Mammary epithelial cell (primary cell): ENCODE measurements at regions of chr1 and their contacts with region 1.

Region 1: GRCh38 chr1:231211005-231211857 is 29.8 kb upstream of the GNPAT start:
- DNase-seq: peak; percentile 64
- H3K4me3 ChIP-seq: peak overlapping the region; percentile 37 to 58 (median 37)
- H3K27ac ChIP-seq: no peak overlapping the region
- H3K4me1 ChIP-seq: peaks cover under 1% of the 10 kb centered on the region
- H3K27me3 ChIP-seq: no peaks in the 10 kb centered on the region
- CTCF ChIP-seq: peak; percentile 76 to 95

Region 2: DNA sequence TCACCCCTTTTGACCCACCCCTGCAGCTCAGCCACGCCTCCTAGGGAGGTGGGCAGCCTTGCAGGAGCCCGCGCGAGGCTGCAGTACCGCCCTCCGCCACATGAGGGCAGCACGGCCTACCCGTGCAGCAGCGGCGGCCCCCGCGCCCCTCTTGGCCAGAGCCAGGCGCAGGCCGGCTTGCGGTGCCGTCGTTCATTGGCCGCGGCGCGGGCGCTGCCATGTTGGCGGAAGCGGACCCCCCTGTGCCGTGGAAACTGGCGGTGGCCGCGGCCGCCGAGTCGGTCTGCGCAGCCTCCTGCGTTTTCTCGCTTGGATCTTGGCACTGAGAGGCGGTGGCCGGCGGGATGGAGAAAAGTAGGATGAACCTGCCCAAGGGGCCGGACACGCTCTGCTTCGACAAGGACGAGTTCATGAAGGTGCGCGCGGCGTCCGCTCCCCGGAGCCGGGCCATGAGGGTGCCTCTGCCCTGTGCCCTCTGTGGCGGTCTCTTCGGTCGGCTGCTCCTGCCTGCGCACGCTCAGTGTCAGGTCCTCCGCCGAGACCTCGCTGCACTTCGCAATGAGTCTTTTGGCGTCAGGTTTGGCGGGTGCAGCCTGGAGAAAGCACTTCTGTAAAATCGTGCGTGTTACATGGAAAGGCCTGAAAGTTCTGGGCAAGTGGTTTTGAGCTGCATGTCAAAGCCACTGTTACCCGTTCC is 568.8 kb before region 1 on chr1 and contains the start of gene COG2:
- CTCF ChIA-PET with region 1: no interaction called
- dilution Hi-C with region 1: no loop called
- in situ Hi-C with region 1: loop called in 1 of 2 experiments (anchors 25 kb)
- intact Hi-C with region 1: no loop called
- DNase-seq: peak; percentile 89
- H3K4me3 ChIP-seq: peak within 1 kb of the TSS; percentile 57 to 94 (median 68)
- H3K27ac ChIP-seq: peak within 1 kb of the TSS; percentile 42
- H3K4me1 ChIP-seq: peaks cover 16% of the 10 kb centered on the region
- H3K27me3 ChIP-seq: no peaks in the 10 kb centered on the region
- CTCF ChIP-seq: peak; percentile 94 to 97
- total RNA-seq, gene COG2: 16.7 to 17.7 TPM

Region 3: GRCh38 chr1:230917284-230918135 is 293.7 kb before region 1 on chr1:
- CTCF ChIA-PET with region 1: no interaction called
- dilution Hi-C with region 1: no loop called
- in situ Hi-C with region 1: loop called (anchors 10 to 25 kb)
- intact Hi-C with region 1: loop called (anchors 1 kb)
- DNase-seq: peak; percentile 44
- H3K4me3 ChIP-seq: no peak overlapping the region
- H3K27ac ChIP-seq: no peak overlapping the region
- H3K4me1 ChIP-seq: no peaks in the 10 kb centered on the region
- H3K27me3 ChIP-seq: no peaks in the 10 kb centered on the region
- CTCF ChIP-seq: peak; percentile 73 to 81

Region 4: DNA sequence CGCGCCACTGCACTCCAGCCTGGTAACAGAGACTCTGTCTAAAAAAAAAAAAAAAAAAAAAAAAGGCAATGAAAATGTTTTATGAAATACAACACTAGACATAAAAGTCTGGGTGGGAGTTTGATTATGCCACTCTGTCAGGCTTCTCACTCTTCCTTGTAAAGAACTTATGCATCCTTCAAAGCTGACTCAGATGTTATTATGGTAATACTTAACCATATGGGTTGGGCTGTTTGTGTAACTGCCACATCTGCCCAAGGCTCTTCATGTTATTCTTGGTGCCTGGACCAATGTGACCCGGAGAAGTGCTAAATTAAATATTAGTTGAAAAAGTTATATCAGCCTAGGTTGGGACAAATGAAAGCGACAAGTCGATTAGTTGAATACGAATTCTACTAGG is 195.0 kb before region 1 on chr1:
- CTCF ChIA-PET with region 1: no interaction called
- dilution Hi-C with region 1: no loop called
- in situ Hi-C with region 1: no loop called
- intact Hi-C with region 1: loop called (anchors 10 kb)
- DNase-seq: peak; percentile 43
- H3K4me3 ChIP-seq: no peak overlapping the region
- H3K27ac ChIP-seq: peak overlapping the region; percentile 95
- H3K4me1 ChIP-seq: peaks cover 31% of the 10 kb centered on the region
- H3K27me3 ChIP-seq: no peaks in the 10 kb centered on the region
- CTCF ChIP-seq: no peak

Region 5: DNA sequence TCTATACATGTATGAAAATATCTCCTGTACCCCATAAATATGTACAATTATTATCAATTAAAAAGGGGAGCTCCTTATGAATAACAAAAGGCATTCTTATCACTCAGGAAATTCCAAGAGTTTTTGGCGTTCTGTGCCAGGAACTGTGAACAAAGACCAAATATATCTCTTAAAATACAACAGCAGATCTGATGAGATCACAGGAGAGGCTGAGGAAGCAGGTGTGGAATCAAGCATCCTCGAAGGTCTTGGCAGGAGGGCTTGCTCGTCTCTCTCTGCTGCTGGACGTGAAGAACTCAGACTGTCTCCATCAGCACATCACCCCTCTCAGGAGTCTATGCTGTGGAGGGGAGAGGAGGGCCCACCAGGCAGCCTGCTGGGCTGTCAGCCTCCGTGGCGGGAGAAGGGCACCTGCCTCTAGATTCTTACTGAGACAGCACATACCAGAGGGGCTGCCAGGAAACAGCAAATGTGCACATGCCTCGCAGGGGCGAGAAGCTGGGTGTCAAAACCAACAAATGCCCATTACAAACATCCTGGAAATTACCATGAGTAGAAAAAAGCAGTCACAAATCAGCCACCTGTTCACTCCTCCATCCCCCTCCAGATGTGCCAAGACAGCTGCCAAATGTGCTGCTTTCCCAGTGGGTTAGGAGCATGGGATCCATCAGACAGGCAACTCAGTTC is 140.3 kb before region 1 on chr1:
- CTCF ChIA-PET with region 1: no interaction called
- dilution Hi-C with region 1: no loop called
- in situ Hi-C with region 1: no loop called
- intact Hi-C with region 1: no loop called
- DNase-seq: no peak
- H3K4me3 ChIP-seq: no peak overlapping the region
- H3K27ac ChIP-seq: no peak overlapping the region
- H3K4me1 ChIP-seq: no peaks in the 10 kb centered on the region
- H3K27me3 ChIP-seq: no peaks in the 10 kb centered on the region
- CTCF ChIP-seq: no peak

Region 6: DNA sequence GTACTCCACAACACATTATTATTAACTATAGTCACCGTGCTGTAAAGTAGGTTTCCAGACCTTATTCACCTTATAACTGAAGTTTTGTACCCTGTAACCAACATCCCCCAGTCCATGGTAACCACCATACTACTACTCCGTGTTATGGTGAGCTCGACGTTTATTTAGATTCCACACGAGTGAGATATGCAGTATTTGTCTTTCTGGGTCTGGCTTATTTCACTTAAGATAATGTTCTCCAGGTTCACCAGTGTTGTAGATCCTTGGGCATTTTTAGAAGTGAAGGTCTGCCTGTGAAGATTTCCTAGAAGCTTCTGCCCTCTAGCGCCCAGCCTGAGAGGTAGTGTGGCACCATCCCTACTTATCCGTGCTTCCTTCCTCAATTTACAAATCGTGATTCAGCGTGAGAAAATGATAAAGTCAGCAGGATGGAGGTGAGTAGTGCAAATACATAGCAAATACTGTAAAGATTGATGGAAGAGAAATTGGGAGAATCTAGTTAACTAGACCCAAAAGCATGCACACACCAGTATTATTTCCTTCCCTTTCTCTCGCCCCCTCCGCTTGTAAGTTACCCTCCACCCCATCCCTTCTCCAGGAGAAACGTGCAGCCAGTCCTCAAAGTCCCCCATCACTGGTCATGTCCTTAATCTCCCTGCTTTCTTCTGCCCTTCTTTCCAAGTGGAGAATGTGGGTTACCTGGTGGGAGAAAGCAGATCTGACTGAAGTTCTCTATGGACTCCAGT is 379.4 kb after region 1 on chr1:
- CTCF ChIA-PET with region 1: no interaction called
- dilution Hi-C with region 1: no loop called
- in situ Hi-C with region 1: no loop called
- intact Hi-C with region 1: loop called (anchors 5 kb)
- DNase-seq: peak; percentile 51
- H3K4me3 ChIP-seq: no peak overlapping the region
- H3K27ac ChIP-seq: no peak overlapping the region
- H3K4me1 ChIP-seq: no peaks in the 10 kb centered on the region
- H3K27me3 ChIP-seq: no peaks in the 10 kb centered on the region
- CTCF ChIP-seq: peak; percentile 71 to 80